ENCODE measurements at regions of chr15 and their contacts with region 1.

Region 1: GRCh38 chr15:89893696-89894455 is at the start of gene AP3S2:
- DNase-seq: peak; percentile 97
- H3K4me3 ChIP-seq: peak within 1 kb of the TSS; percentile 99
- H3K27ac ChIP-seq: peak within 1 kb of the TSS; percentile 91
- H3K4me1 ChIP-seq: peaks cover 14% of the 10 kb centered on the region
- H3K27me3 ChIP-seq: no peaks in the 10 kb centered on the region
- total RNA-seq, gene AP3S2: 78.7 and 85.0 TPM in 2 replicates

Region 2: GRCh38 chr15:89017370-89018066 is 876.4 kb before region 1 on chr15:
- in situ Hi-C with region 1: no loop called
- DNase-seq: peak; percentile 91
- H3K4me3 ChIP-seq: peak overlapping the region; percentile 55
- H3K27ac ChIP-seq: peak overlapping the region; percentile 77
- H3K4me1 ChIP-seq: peaks cover 42% of the 10 kb centered on the region
- H3K27me3 ChIP-seq: no peaks in the 10 kb centered on the region

Region 3: GRCh38 chr15:89680282-89680873 is 213.5 kb before region 1 on chr15:
- in situ Hi-C with region 1: no loop called
- DNase-seq: peak; percentile 85
- H3K4me3 ChIP-seq: no peak overlapping the region
- H3K27ac ChIP-seq: no peak overlapping the region
- H3K4me1 ChIP-seq: peaks cover 16% of the 10 kb centered on the region
- H3K27me3 ChIP-seq: no peaks in the 10 kb centered on the region

Region 4: GRCh38 chr15:90071208-90071807 is 177.4 kb after region 1 on chr15:
- in situ Hi-C with region 1: loop called (anchors 10 kb)
- DNase-seq: peak; percentile 90
- H3K4me3 ChIP-seq: no peak overlapping the region
- H3K27ac ChIP-seq: no peak overlapping the region
- H3K4me1 ChIP-seq: no peaks in the 10 kb centered on the region
- H3K27me3 ChIP-seq: no peaks in the 10 kb centered on the region

Region 5: DNA sequence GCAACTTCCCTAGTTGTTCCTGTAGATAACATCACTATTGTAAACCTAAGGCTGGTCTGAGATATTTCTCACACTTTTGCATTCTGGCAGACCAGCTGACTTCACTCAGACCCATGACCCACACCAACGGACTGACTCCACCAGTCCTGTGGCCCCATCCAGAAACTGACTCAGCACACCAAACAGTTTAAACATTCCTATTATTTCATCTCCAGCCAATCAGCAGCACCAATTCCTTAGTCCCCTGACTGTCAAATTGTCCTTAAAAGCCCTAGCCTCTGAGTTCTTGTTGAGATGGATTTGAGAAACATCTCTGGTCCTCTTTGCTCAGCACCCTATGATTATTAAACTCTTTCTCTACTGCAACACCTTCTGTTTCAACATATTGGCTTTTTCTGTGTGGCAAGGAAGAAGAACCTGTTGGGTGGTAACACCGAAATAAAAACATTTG is 220.6 kb after region 1 on chr15:
- in situ Hi-C with region 1: no loop called
- DNase-seq: peak; percentile 18
- H3K4me3 ChIP-seq: no peak overlapping the region
- H3K27ac ChIP-seq: no peak overlapping the region
- H3K4me1 ChIP-seq: no peaks in the 10 kb centered on the region
- H3K27me3 ChIP-seq: no peaks in the 10 kb centered on the region; the same call in 1 of the 2 replicates

Measured in GM23248 (cell line).